ENCODE measurements at regions of chr4 and their contacts with region 1.

Region 1: DNA sequence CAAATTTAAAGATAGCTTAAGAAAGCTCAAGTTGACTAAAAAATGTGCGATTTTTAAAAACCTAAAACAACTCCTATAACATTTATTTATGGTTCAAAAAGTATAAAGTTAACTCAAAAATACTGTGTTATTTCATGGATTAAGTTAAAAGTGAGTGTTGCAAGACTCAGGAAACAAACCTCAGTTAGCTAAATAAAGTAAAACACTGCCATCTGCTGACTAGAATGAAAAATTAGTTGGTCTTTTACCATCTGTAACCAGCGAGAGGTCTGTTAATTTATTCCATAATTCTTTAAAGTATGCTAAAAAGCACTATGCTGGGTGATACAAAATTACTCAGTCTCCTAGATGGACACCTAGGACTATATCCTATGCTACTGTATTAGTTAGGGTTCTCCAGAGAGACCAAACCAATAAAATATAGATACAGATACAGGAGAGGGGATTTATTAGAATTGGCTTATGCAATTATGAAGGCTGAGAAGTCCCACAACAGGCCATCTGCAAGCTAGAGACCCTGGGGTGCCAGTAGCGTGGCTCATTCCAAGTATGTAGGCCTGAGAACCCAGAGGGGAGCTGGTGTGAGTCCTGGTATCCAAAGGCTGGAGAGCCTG is 4.9 kb upstream of the WDFY3 start:
- DNase-seq: no peak
- H3K4me3 ChIP-seq: no peak overlapping the region
- H3K27ac ChIP-seq: no peak overlapping the region
- H3K4me1 ChIP-seq: peaks cover 5% of the 10 kb centered on the region
- H3K27me3 ChIP-seq: no peaks in the 10 kb centered on the region
- CTCF ChIP-seq: peak; percentile 46 to 56 (median 48)
- POLR2A ChIP-seq: no peak

Region 2: DNA sequence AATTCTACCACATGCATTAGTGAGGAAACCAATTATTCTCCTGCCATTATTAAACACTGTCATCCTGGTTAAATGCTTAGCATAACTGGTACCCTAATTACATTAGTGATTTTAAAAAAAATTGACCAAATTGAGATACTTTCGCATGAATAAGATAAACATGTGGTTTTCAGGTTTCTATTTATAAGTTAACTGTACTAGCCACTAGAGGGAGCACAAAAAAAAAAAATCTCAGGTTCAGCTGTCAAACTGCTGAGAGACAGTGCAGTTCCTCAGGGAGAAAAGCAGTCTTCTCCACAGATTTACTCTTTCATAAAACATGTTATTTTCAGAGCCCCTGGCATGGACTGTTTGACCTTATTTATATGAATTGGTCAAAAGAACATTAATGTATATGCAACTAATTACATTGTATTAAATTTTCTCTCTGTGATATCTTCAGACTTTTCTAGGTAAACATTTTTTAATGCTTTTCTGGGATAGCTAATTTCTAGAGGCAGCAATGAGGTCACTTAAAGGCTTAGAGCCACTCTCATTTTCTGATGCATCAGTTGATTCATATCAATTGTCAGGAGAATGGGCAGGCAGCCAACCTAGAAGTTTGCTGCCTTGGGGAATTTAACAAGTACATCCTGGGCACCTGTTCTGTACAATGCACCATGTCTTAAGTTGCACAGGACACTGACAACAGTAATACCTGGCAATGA is 221.0 kb before region 1 on chr4:
- intact Hi-C with region 1: loop called (anchors 5 kb)
- DNase-seq: no peak
- H3K4me3 ChIP-seq: no peak overlapping the region
- H3K27ac ChIP-seq: no peak overlapping the region
- H3K4me1 ChIP-seq: no peaks in the 10 kb centered on the region
- H3K27me3 ChIP-seq: no peaks in the 10 kb centered on the region
- CTCF ChIP-seq: peak; percentile 56 to 60 (median 59)
- POLR2A ChIP-seq: no peak

Region 3: GRCh38 chr4:85028910-85029309 is 57.5 kb after region 1 on chr4:
- intact Hi-C with region 1: no loop called
- DNase-seq: no peak
- H3K4me3 ChIP-seq: no peak overlapping the region
- H3K27ac ChIP-seq: no peak overlapping the region
- H3K4me1 ChIP-seq: no peaks in the 10 kb centered on the region
- H3K27me3 ChIP-seq: no peaks in the 10 kb centered on the region
- CTCF ChIP-seq: no peak
- POLR2A ChIP-seq: no peak

Measured in testis (tissue), 5 donors.